ENCODE measurements at regions of chr10 and their contacts with region 1.

Region 1: DNA sequence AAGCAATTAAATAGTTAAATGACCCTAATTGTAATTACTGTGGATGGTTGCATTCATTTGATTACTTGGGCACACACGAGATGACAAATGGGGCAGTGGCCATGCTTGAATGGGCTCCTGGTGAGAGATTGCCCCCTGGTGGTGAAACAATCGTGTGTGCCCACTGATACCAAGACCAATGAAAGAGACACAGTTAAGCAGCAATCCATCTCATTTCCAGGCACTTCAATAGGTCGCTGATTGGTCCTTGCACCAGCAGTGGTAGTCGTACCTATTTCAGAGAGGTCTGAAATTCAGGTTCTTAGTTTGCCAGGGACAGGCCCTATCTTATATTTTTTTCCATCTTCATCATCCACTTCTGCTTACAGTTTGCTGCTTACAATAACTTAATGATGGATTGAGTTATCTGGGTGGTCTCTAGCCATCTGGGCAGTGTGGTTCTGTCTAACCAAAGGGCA is 8.3 kb downstream of the PCBD1 start:
- DNase-seq: peak; percentile 68 to 82
- H3K4me3 ChIP-seq: no peak overlapping the region
- H3K4me1 ChIP-seq: no peaks in the 10 kb centered on the region
- H3K27me3 ChIP-seq: no peaks in the 10 kb centered on the region

Region 2: DNA sequence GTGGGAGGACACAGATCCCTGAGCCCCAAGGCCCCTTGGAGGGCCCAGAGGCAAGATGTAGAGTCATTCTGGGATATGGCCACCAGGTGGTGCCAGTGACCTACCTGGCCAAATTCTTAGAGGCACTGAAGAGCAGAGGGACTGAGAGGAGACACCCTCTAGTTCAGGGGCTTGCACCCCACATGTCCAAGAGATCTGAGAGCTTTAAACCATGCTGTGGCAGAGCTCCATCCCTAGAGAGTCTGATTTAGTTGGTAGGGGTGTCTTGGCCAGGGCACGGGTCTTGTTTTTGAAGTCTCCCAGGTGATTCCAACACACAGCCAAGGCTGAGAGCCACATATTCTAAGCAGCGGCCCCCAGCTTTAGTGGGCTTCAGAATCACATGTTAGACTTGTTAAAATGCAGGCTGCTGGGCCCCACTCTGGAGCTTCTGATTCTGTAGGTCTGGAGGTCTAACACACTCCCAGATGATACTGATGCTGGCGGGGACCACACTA is 330.1 kb before region 1 on chr10:
- in situ Hi-C with region 1: loop called (anchors 10 kb)
- DNase-seq: peak in 1 of 2 experiments; percentile 76
- H3K4me3 ChIP-seq: no peak overlapping the region
- H3K4me1 ChIP-seq: no peaks in the 10 kb centered on the region
- H3K27me3 ChIP-seq: no peaks in the 10 kb centered on the region

Measured in HAP-1 (cell line).